Spleen (tissue), 13 donors: ENCODE measurements at regions of chr10 and their contacts with region 1.

Region 1: DNA sequence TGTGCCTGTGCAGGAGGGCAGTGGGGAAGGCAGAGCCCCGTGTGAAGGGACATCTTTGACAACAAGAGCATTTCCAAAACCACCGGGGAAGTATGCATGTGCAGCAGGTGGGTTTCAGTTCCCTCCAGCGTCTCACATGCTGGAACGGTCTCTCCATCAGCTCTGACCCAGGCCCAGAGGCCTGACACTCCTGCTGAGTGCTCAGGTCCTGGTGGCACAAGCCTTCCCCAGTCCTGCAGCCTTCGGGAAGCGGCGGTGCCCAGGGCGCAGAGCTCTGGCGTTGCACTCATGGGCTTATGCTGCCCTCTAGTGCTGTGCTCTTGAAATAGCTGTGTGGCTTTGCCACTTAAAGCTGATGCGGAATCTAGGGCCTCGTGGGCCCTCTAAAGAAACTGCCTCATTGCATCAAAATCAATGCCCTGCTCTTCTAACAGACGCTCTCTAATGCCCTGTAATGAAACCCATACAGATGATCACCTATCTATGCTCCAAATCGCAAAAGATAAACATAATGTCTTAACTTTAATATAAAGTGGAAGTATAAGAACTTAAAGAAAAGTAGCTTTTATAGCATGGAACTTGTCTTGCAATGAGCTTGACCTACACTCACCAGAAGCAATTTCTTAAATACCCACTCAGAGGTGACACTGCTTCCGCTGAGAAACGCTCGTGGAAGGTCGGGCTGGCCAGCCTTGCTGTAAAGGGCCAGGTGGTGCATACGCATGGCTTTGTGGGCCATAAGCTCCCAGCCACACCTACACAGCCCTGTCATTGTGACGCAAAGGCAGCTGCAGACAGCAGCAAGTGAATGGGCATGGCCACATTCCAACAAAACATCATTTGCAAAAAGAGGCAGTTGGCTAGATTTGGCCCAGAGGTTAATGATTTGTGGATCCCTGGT is 38.6 kb downstream of the CLRN3 start:
- DNase-seq: peak; percentile 90
- H3K4me3 ChIP-seq: no peak overlapping the region
- H3K27ac ChIP-seq: no peak overlapping the region
- H3K4me1 ChIP-seq: peaks cover 12 to 27% (median 18%) of the 10 kb centered on the region in 6 donors
- H3K27me3 ChIP-seq: peaks cover 0 to 9% (median 0%) of the 10 kb centered on the region in 7 donors
- CTCF ChIP-seq: peak; percentile 56 to 91 (median 79)
- POLR2A ChIP-seq: no peak

Region 2: DNA sequence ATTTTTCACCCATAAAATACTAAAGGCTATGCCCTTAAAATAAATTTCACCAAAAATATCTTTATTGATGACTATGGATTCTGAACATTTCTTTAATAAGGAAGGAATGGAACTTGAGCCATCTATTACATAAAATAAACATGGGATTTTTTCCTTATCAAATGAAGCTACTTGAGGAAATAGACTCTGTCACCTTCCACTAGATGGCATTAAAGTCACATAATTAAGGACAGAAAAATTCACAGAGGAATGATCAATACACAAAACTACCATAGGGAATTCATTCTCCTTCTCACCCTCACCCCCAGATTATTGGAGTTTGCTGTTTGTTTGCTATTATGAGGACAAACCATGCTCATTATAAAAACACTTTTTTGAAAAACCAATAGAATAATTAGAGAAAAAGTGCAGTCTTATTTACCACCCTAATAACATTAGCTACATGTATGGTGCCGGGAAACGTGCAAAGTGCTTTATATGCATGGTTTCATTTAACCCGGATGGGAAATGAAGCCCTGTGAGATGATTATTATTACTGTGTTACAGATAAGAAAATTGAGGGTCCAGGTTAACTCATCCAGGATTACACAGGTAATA is 138.2 kb before region 1 on chr10:
- intact Hi-C with region 1: loop called (anchors 5 kb)
- DNase-seq: no peak
- H3K4me3 ChIP-seq: no peak overlapping the region
- H3K27ac ChIP-seq: no peak overlapping the region
- H3K4me1 ChIP-seq: no peaks in the 10 kb centered on the region
- H3K27me3 ChIP-seq: peaks cover 0 to 10% (median 0%) of the 10 kb centered on the region in 7 donors
- CTCF ChIP-seq: peak in 9 of 11 experiments; percentile 17 to 54 (median 43)
- POLR2A ChIP-seq: no peak

Region 3: GRCh38 chr10:128530301-128530700 is 676.2 kb after region 1 on chr10:
- intact Hi-C with region 1: no loop called
- DNase-seq: no peak
- H3K4me3 ChIP-seq: no peak overlapping the region
- H3K27ac ChIP-seq: no peak overlapping the region
- H3K4me1 ChIP-seq: no peaks in the 10 kb centered on the region
- H3K27me3 ChIP-seq: peaks cover 0 to 29% (median 0%) of the 10 kb centered on the region in 7 donors
- CTCF ChIP-seq: peak in 6 of 11 experiments; percentile 8 to 34 (median 29)
- POLR2A ChIP-seq: no peak